ENCODE measurements at regions of chr2 and their contacts with region 1.

Region 1: DNA sequence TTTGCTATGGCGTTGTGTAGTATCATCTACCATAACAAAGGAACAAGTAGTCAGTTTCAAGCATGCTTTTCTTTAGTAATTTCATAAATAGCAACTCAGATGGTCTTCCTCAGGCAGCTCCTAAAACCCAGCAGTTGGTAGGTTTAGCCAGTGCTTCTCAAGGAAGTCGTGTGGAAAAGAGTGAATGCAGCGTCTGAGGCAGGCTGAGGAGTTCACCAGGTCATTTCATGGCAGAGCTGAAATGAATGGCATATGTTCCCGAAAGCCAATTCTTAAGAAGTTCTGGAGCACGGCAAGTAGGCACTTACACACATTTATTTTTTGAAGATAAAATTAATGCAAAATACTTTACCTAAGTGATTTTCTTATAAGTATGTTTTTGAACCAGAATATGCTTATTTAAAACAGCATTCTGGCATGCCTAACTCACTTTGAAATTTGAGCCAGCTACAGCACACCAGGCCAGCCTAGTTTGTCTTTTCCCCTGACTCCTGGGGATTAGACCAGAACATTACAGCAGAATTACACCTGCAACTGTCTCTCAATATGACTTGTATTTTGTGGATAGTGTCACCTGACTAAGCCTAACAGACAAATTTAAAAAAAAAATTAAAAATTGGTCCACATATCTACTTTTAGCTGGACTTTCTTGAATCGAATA is 62.2 kb downstream of the OSBPL6 start:
- DNase-seq: no peak
- H3K27ac ChIP-seq: no peak overlapping the region
- CTCF ChIP-seq: no peak

Region 2: GRCh38 chr2:178280244-178280852 is 23.8 kb after region 1 on chr2:
- CTCF ChIA-PET with region 1: interaction called, 10 read pairs
- POLR2A ChIA-PET with region 1: no interaction called
- DNase-seq: peak; percentile 51
- H3K27ac ChIP-seq: peak overlapping the region; percentile 75
- CTCF ChIP-seq: peak; percentile 67

Region 3: DNA sequence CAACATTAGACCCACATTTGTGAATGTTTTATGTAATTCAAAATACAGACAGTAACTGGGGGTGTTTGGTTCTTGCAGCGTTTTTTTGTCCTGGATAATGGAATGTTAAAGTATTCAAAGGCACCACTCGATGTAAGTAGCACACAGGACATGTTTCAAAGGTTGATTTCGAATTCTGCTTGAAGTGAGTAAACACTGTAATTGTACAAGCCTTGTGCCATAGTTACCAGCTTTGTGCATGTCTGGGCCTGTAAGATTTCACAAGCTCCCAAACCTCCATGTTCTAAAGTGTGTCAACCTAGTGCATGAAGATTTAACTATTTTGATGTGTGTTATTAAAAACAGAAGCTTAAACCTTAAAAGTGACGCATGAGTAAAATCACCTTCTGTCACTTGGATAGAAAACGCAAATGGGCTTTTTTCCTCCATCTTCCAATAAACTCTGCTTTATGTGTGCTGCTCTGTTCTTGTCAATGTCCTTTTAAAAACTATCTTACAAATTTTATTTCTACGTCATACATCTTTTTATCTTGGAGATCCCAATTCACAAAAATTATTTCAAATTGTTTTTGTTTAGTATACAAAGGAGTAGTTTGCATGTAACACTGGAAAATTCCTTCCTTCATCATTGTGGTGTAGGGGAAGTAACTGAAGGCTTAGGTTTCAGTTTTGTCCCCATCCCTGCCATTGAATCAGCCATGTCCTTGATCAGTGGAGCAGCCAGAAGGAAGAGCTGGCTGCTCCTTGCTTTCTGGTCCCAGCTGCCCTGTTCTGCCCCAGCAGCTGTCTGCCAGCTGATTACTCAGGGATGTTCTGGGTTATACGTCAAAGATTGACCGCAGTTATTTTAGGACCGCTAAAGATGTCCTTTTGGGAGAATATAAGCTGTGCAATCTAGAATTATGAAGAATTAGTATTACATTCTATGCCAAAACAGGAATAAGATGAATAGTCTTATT is 75.2 kb after region 1 on chr2:
- CTCF ChIA-PET with region 1: no interaction called
- POLR2A ChIA-PET with region 1: no interaction called
- DNase-seq: peak; percentile 48
- H3K27ac ChIP-seq: peak overlapping the region; percentile 40
- CTCF ChIP-seq: no peak

Measured in RWPE1 (cell line).